ENCODE measurements at regions of chr4 and their contacts with region 1.

Region 1: DNA sequence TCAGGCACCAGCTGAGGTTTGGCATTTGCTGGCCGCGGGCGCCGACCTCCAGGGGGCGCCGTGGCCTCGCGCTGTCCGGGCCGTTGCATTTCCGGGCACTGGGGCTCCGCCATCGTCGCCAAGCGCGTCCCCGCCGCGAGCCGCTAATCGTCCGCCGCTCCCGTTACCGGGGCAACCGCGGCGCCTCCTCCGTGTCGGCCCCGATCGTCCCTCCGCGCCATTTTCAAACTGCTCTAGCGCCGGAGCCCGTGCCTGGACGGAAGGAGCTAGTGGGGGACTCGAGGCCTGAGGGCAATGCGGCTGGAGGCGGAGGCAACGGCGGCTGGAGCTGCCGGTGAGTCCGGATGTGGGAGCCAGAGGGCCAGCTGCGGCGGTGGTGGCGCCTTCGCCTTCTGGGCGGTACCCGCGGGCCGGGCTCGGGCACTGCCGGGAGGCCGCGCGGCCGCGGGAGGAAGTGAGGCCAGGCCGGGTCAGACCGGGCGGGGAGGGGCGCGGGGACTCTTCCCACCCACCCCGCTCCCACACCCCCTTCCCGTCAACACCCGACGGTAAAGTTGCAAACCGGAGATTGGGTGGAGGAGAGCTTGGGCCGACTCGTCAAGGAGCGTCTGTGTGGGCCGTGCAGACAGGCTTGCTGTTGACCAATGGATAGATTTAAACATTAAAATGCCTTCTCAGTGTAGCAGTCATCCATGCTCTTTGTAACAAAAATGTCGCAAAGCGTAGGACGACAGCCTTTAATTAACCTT is at the start of gene CEP135:
- DNase-seq: peak; percentile 88
- ATAC-seq: peak; percentile 86
- H3K4me3 ChIP-seq: peak within 1 kb of the TSS; percentile 79
- H3K27ac ChIP-seq: peak within 1 kb of the TSS; percentile 99
- H3K4me1 ChIP-seq: peaks cover 6% of the 10 kb centered on the region
- H3K27me3 ChIP-seq: no peaks in the 10 kb centered on the region
- CTCF ChIP-seq: peak; percentile 89
- POLR2A ChIP-seq: peak; percentile 80; the same call in 1 of the 2 replicates
- RAD21 ChIP-seq: peak; percentile 68
- total RNA-seq, gene CEP135: 3.2 and 6.4 TPM in 2 replicates

Region 2: GRCh38 chr4:55931833-55932232 is 17.1 kb before region 1 on chr4:
- CTCF ChIA-PET with region 1: interaction called, 10 read pairs
- POLR2A ChIA-PET with region 1: interaction called, 8 read pairs
- dilution Hi-C with region 1: no loop called
- in situ Hi-C with region 1: no loop called
- intact Hi-C with region 1: loop called (anchors 2 kb)
- DNase-seq: peak; percentile 80
- ATAC-seq: peak; percentile 86
- H3K4me3 ChIP-seq: no peak overlapping the region
- H3K27ac ChIP-seq: peak overlapping the region; percentile 78
- H3K4me1 ChIP-seq: peaks cover 8% of the 10 kb centered on the region
- H3K27me3 ChIP-seq: no peaks in the 10 kb centered on the region
- CTCF ChIP-seq: no peak
- POLR2A ChIP-seq: no peak
- RAD21 ChIP-seq: no peak

Region 3: GRCh38 chr4:56007154-56007553 is 58.3 kb after region 1 on chr4:
- CTCF ChIA-PET with region 1: no interaction called
- POLR2A ChIA-PET with region 1: no interaction called
- dilution Hi-C with region 1: no loop called
- in situ Hi-C with region 1: no loop called
- intact Hi-C with region 1: no loop called
- DNase-seq: no peak
- ATAC-seq: no peak
- H3K4me3 ChIP-seq: no peak overlapping the region
- H3K27ac ChIP-seq: no peak overlapping the region
- H3K4me1 ChIP-seq: no peaks in the 10 kb centered on the region; the same call in 1 of the 2 replicates
- H3K27me3 ChIP-seq: no peaks in the 10 kb centered on the region
- CTCF ChIP-seq: no peak
- POLR2A ChIP-seq: no peak
- RAD21 ChIP-seq: no peak

Region 4: DNA sequence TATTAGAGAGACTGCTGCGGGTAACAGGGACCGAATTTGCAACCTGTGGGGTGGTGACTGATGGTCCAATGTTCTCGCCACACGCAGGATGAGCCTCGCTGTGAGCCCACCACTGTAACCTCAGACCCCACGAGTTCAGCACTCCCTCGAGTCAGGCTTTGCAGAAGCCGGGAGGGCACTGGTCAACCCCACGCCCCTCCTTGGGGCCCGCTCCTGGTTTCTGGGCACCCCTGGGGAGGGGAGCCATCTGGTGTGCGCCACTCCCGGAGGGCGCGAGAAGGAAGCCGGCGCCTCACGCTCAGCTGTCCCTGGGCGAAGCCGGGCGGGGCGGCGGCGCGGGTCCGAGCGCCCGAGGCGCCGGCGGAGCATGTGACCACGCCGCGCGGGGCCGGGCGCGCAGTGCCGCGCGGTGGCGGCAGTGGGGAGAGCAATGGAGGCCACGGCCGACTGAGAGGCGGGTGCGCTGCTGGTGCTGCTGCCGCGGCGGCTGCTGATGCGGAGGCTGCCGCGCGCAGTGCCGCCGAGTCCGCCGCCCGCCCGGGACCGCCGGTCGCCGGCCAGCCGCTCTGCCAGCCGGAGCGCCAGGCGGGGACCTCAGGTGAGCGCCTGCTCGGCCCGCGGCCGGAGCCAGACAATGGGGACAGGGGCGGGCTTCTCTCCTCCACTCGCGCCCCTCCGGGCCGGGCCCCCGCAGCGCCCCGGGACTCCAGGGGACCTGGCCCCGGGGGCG is 100.0 kb after region 1 on chr4:
- CTCF ChIA-PET with region 1: interaction called, 3 read pairs
- POLR2A ChIA-PET with region 1: no interaction called
- dilution Hi-C with region 1: no loop called
- in situ Hi-C with region 1: no loop called
- intact Hi-C with region 1: loop called (anchors 1 kb)
- DNase-seq: peak; percentile 39
- ATAC-seq: peak; percentile 99
- H3K4me3 ChIP-seq: peak overlapping the region; percentile 58
- H3K27ac ChIP-seq: no peak overlapping the region
- H3K4me1 ChIP-seq: no peaks in the 10 kb centered on the region
- H3K27me3 ChIP-seq: peaks cover 18% of the 10 kb centered on the region
- CTCF ChIP-seq: peak; percentile 52
- POLR2A ChIP-seq: no peak
- RAD21 ChIP-seq: peak; percentile 36; the same call in 1 of the 2 replicates

Region 5: GRCh38 chr4:56129431-56129861 is 180.5 kb after region 1 on chr4:
- CTCF ChIA-PET with region 1: no interaction called
- POLR2A ChIA-PET with region 1: no interaction called
- dilution Hi-C with region 1: no loop called
- in situ Hi-C with region 1: no loop called
- intact Hi-C with region 1: no loop called
- DNase-seq: no peak
- ATAC-seq: no peak
- H3K4me3 ChIP-seq: no peak overlapping the region
- H3K27ac ChIP-seq: no peak overlapping the region
- H3K4me1 ChIP-seq: no peaks in the 10 kb centered on the region; the same call in 1 of the 2 replicates
- H3K27me3 ChIP-seq: no peaks in the 10 kb centered on the region
- CTCF ChIP-seq: no peak
- POLR2A ChIP-seq: no peak
- RAD21 ChIP-seq: no peak

Region 6: DNA sequence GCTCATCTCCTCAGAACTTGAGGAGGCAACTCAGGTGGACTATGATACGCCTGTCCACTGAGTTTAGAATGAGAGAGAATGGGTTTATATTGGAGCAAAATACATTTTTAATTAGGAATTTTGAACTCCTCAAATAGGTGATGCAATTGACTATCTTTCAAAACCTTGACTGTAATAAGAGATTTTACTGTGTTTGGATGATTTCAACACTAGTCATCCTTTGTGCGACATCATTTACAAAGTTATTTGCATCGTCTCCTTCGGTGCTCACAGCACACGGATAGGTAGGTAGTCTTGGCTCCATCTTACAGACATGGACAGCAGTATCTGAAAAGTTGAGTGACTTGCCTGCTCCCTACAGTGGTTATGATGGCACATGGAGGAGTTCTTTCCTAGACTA is 371.4 kb after region 1 on chr4:
- CTCF ChIA-PET with region 1: no interaction called
- POLR2A ChIA-PET with region 1: no interaction called
- dilution Hi-C with region 1: no loop called
- in situ Hi-C with region 1: no loop called
- intact Hi-C with region 1: loop called (anchors 1 kb)
- DNase-seq: peak; percentile 67
- ATAC-seq: peak; percentile 62; the same call in 1 of the 2 replicates
- H3K4me3 ChIP-seq: no peak overlapping the region
- H3K27ac ChIP-seq: peak overlapping the region; percentile 40; the same call in 1 of the 2 replicates
- H3K4me1 ChIP-seq: peaks cover 6% of the 10 kb centered on the region
- H3K27me3 ChIP-seq: no peaks in the 10 kb centered on the region
- CTCF ChIP-seq: no peak
- POLR2A ChIP-seq: no peak
- RAD21 ChIP-seq: no peak

Region 7: GRCh38 chr4:56840559-56840958 is 891.7 kb after region 1 on chr4:
- CTCF ChIA-PET with region 1: no interaction called
- POLR2A ChIA-PET with region 1: no interaction called
- dilution Hi-C with region 1: no loop called
- in situ Hi-C with region 1: no loop called
- intact Hi-C with region 1: loop called (anchors 1 kb)
- DNase-seq: no peak
- ATAC-seq: no peak
- H3K4me3 ChIP-seq: no peak overlapping the region
- H3K27ac ChIP-seq: no peak overlapping the region
- H3K4me1 ChIP-seq: no peaks in the 10 kb centered on the region
- H3K27me3 ChIP-seq: no peaks in the 10 kb centered on the region
- CTCF ChIP-seq: no peak
- POLR2A ChIP-seq: no peak
- RAD21 ChIP-seq: no peak

Measured in IMR-90 (cell line).